AG04449 (cell line): ENCODE measurements at regions of chr12 and their contacts with region 1.

Region 1: DNA sequence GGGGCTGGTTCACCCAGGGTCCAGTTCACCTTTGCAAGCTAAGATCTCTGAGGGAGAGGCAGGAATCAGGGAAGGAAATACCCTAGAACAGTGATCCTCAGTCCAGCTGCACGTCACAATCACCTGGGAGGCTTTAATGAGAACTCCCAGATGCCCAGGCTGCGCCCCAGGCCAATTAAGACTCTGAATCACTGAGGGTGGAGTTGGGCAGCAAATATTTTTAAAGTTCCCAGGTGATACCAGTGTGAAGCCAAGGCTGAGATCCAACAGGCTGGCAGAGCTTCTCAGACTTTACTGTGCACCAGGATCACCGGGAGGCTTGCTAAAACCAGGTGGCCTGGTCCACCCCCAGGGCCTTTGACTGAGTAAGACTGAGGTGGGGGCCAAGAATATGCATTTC is 23.8 kb downstream of the MYL2 start:
- DNase-seq: no peak
- H3K4me3 ChIP-seq: no peak overlapping the region
- CTCF ChIP-seq: no peak

Region 2: DNA sequence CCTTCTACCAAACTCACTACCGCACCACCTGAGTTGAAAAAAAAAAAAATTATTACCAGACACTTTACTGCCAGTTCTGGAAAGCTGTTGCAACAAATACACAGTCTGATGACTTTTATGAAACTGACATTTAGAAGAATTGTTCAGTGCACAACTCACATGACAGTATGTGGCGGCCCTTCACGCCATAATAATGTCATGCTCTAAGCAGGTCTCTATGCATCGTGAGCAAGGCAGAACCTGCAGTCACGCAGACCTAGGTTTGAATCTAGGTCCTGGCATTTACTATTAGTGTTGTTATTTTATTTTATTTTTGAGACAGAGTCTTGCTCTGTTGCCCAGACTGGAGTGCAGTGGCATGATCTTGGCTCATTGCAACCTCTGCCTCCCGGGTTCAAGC is 15.7 kb after region 1 on chr12:
- CTCF ChIA-PET with region 1: interaction called, 15 read pairs
- POLR2A ChIA-PET with region 1: no interaction called
- DNase-seq: no peak
- H3K4me3 ChIP-seq: no peak overlapping the region
- CTCF ChIP-seq: no peak

Region 3: DNA sequence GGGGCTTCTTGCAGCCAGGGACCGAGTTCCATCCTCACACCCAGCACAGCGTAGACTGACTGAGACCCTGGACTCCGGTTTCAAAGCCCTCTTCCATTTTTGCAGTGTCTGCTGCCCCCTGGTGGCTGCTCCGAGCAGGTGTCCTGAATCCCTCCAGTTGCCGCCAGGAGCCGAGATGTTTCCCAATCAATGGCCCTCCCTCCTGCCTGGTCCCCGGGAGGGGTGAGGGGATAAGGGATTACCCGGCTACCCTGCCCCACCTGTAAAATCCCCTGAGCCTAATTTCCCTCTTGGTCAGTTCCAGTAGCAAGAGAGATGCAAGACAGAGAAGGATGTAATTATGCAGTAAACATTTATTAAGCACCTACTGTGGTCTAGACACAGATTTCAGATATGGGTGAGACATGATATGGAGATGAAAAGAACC is 417.3 kb after region 1 on chr12:
- CTCF ChIA-PET with region 1: interaction called, 12 read pairs
- POLR2A ChIA-PET with region 1: no interaction called
- DNase-seq: no peak
- H3K4me3 ChIP-seq: no peak overlapping the region
- CTCF ChIP-seq: peak; percentile 90

Region 4: GRCh38 chr12:111643427-111643826 is 746.9 kb after region 1 on chr12:
- CTCF ChIA-PET with region 1: no interaction called
- POLR2A ChIA-PET with region 1: no interaction called
- DNase-seq: peak; percentile 45
- H3K4me3 ChIP-seq: no peak overlapping the region
- CTCF ChIP-seq: no peak